ENCODE measurements at regions of chr6 and their contacts with region 1.

Region 1: DNA sequence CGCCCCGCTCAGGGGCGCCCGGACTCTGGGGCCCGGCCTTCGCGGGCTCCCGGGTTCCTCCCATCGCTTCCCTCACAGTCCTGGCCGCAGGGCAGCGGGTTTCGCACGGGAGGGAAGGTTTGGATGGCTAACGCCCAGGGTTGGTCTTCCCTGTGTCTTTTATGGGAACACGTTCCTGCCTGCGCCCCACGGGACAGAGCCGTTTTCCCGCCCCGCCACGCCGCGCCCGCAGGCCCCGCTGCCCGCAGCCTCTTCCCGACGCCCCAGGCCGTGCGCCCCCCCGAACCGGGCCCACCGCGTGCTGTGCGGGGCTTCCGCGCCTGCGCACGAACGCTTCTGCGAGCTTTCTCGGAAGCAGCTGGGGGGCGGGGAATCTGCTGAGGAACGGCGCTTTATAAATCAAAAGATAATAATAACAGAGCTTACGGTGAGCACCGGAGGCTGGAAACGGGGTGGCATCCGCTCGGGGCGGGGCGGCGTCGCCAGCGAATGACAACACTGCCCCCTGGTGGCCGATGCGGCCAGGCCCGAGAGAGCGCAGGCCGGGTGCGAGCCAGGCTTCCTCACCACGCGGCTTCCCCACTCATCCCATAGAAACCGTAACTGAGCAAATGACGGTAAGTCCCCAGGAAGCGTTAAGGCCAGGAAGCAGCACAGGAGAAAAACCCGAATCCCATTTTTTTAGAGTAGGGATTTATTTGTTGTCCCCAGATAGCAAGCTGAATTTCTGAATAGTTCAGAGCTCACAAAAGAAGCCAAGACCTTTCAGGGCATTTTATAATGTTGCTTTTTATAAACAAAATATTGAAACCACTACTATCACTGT is 116.4 kb downstream of the MYLK4 start:
- DNase-seq: peak; percentile 57 to 94
- H3K4me3 ChIP-seq: peak overlapping the region; percentile 46 to 58
- H3K27ac ChIP-seq: peak overlapping the region; percentile 95 to 96
- H3K4me1 ChIP-seq: peaks cover 0 to 42% of the 10 kb centered on the region in 2 donors
- H3K27me3 ChIP-seq: no peaks in the 10 kb centered on the region
- CTCF ChIP-seq: peak; percentile 98 to 99 (median 99)

Region 2: GRCh38 chr6:1624851-1625781 is 1009.2 kb before region 1 on chr6:
- intact Hi-C with region 1: loop called (anchors 5 kb)
- DNase-seq: no peak
- H3K4me3 ChIP-seq: peak overlapping the region; percentile 72 to 94
- H3K27ac ChIP-seq: peak overlapping the region; percentile 96 to 100
- H3K4me1 ChIP-seq: peaks cover 6 to 37% of the 10 kb centered on the region in 2 donors
- H3K27me3 ChIP-seq: no peaks in the 10 kb centered on the region
- CTCF ChIP-seq: no peak

Region 3: GRCh38 chr6:2111162-2111677 is 523.1 kb before region 1 on chr6:
- intact Hi-C with region 1: loop called (anchors 2 kb)
- DNase-seq: no peak
- H3K4me3 ChIP-seq: peak overlapping the region in 1 of 2 donors; percentile 49
- H3K27ac ChIP-seq: peak overlapping the region; percentile 82 to 83
- H3K4me1 ChIP-seq: peaks cover 0 to 20% of the 10 kb centered on the region in 2 donors
- H3K27me3 ChIP-seq: no peaks in the 10 kb centered on the region
- CTCF ChIP-seq: no peak

Region 4: GRCh38 chr6:2353412-2354137 is 280.8 kb before region 1 on chr6:
- intact Hi-C with region 1: loop called (anchors 1 kb)
- DNase-seq: peak; percentile 12 to 90
- H3K4me3 ChIP-seq: peak overlapping the region in 1 of 2 donors; percentile 14
- H3K27ac ChIP-seq: peak overlapping the region; percentile 80 to 90
- H3K4me1 ChIP-seq: peaks cover 4 to 25% of the 10 kb centered on the region in 2 donors
- H3K27me3 ChIP-seq: no peaks in the 10 kb centered on the region
- CTCF ChIP-seq: peak; percentile 56 to 73 (median 72)

Region 5: GRCh38 chr6:2611090-2611489 is 23.3 kb before region 1 on chr6:
- intact Hi-C with region 1: loop called (anchors 2 kb)
- DNase-seq: no peak
- H3K4me3 ChIP-seq: no peak overlapping the region
- H3K27ac ChIP-seq: no peak overlapping the region
- H3K4me1 ChIP-seq: peaks cover 0 to 6% of the 10 kb centered on the region in 2 donors
- H3K27me3 ChIP-seq: no peaks in the 10 kb centered on the region
- CTCF ChIP-seq: no peak

Measured in ascending aorta (tissue), 2 donors.